ENCODE measurements at regions of chr1 and their contacts with region 1.

Region 1: DNA sequence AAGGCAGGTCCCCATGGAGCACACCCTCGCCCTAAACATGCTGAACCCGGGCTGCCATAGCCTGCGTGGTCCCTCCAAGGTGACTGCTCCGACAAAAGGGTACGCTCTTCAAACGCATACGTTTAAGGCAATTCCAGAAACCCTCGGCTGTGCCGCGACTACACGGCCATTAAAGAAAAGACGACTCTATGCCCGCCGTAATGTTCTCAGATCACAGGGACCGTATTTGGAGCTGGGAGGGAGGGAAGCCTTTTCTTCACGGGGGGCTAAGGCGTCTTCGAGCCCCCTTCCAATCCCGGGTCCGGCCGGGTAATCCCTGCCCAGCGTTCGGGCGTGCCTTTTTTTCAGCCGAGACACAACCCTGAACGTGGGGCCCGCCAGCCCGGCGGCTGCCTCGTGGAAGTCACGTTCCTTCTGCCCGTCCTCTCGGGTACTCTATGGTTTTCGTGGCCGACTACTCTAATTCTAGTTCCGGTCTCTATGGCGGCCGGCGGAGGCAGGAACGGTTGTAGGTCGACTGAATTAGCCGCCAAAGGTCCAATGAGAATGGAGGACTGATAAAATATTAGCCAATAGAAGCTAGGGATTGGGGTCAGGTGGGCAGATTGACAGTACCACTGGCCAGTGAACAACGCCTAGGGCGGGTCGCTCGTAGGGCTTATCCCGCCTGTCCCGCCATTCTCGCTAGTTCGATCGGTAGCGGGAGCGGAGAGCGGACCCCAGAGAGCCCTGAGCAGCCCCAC is at the start of gene YBX1:
- DNase-seq: peak; percentile 93 to 97
- H3K4me3 ChIP-seq: peak within 1 kb of the TSS; percentile 83 to 99 (median 94)
- H3K27ac ChIP-seq: peak within 1 kb of the TSS; percentile 89
- H3K4me1 ChIP-seq: peaks cover 2 to 8% (median 4%) of the 10 kb centered on the region in 4 experiments; a peak in 5 of 7 replicates
- H3K27me3 ChIP-seq: no peaks in the 10 kb centered on the region
- CTCF ChIP-seq: no peak
- EP300 ChIP-seq: no peak
- POLR2A ChIP-seq: peak in 1 of 2 experiments; percentile 60; a peak in 1 of 3 replicates
- RAD21 ChIP-seq: no peak
- total RNA-seq, gene YBX1: 1,219 and 1,248 TPM in 2 replicates

Region 2: DNA sequence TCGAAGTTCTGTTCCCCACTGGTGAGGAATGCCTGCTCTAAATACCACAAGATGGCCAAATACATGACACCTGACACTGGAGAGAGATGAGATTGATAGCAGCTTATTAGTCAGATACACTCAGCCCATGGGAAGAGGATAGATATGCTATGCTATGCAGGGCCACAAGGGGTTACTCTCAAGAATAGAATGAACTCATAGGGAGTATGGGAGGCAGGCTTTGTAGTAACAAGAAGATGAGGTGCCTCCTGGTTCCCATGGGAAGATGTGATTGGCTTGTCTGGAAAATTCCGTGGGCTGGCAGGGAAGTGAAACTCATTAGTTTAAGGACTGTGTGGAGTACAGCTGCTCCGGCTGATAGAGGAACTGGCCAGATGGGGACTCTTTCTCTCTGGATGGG is 202.3 kb before region 1 on chr1:
- CTCF ChIA-PET with region 1: no interaction called
- POLR2A ChIA-PET with region 1: no interaction called
- DNase-seq: no peak
- H3K4me3 ChIP-seq: no peak overlapping the region
- H3K27ac ChIP-seq: no peak overlapping the region
- H3K4me1 ChIP-seq: no peaks in the 10 kb centered on the region
- H3K27me3 ChIP-seq: no peaks in the 10 kb centered on the region
- CTCF ChIP-seq: peak in 2 of 3 experiments; percentile 24 to 60; a peak in 2 of 4 replicates
- EP300 ChIP-seq: no peak
- POLR2A ChIP-seq: no peak
- RAD21 ChIP-seq: peak; percentile 15 to 35; a peak in 2 of 4 replicates

Region 3: GRCh38 chr1:42657971-42658879 is 23.7 kb before region 1 on chr1 and contains the start of gene PPIH:
- CTCF ChIA-PET with region 1: no interaction called
- POLR2A ChIA-PET with region 1: interaction called, 33 read pairs
- DNase-seq: peak; percentile 78 to 92
- H3K4me3 ChIP-seq: peak within 1 kb of the TSS; percentile 87 to 98 (median 92)
- H3K27ac ChIP-seq: peak within 1 kb of the TSS; percentile 60
- H3K4me1 ChIP-seq: peaks cover 0 to 5% (median 3%) of the 10 kb centered on the region in 4 experiments; a peak in 4 of 7 replicates
- H3K27me3 ChIP-seq: no peaks in the 10 kb centered on the region
- CTCF ChIP-seq: peak; percentile 22 to 32 (median 31)
- EP300 ChIP-seq: peak in 1 of 2 experiments; percentile 53; a peak in 1 of 3 replicates
- POLR2A ChIP-seq: peak in 1 of 2 experiments; percentile 77; a peak in 2 of 3 replicates
- RAD21 ChIP-seq: no peak
- total RNA-seq, gene PPIH: 72.8 and 78.1 TPM in 2 replicates

Region 4: DNA sequence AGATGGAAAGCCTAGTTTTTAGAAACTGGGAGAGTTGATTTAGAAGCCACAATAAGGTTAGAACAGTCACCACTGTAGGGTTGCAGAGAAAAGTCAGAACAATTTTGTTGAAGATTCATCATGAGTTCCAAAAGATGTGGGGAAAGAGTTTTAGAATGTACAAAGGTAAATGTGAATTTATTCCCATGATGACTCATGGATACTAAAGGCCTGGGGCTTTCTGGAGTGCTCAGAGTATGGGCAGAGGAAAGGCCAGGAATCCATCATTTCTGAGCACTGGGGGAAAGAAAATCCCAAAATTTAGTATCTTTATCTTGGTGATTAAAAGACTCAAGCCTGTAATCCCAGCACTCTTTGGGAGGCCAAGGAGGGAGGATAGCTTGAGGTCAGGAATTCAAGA is 18.1 kb after region 1 on chr1:
- CTCF ChIA-PET with region 1: no interaction called
- POLR2A ChIA-PET with region 1: interaction called, 43 read pairs
- DNase-seq: no peak
- H3K4me3 ChIP-seq: no peak overlapping the region
- H3K27ac ChIP-seq: no peak overlapping the region
- H3K4me1 ChIP-seq: no peaks in the 10 kb centered on the region
- H3K27me3 ChIP-seq: no peaks in the 10 kb centered on the region
- CTCF ChIP-seq: no peak
- EP300 ChIP-seq: no peak
- POLR2A ChIP-seq: no peak
- RAD21 ChIP-seq: no peak

Region 5: GRCh38 chr1:42723501-42723900 is 41.6 kb after region 1 on chr1:
- CTCF ChIA-PET with region 1: no interaction called
- POLR2A ChIA-PET with region 1: interaction called, 30 read pairs
- DNase-seq: peak in 1 of 2 experiments; percentile 37
- H3K4me3 ChIP-seq: no peak overlapping the region
- H3K27ac ChIP-seq: no peak overlapping the region
- H3K4me1 ChIP-seq: no peaks in the 10 kb centered on the region
- H3K27me3 ChIP-seq: no peaks in the 10 kb centered on the region
- CTCF ChIP-seq: no peak
- EP300 ChIP-seq: no peak
- POLR2A ChIP-seq: no peak
- RAD21 ChIP-seq: no peak

Region 6: GRCh38 chr1:42736150-42736850 is 54.4 kb after region 1 on chr1:
- CTCF ChIA-PET with region 1: interaction called, 3 read pairs
- POLR2A ChIA-PET with region 1: interaction called, 32 read pairs
- DNase-seq: no peak
- H3K4me3 ChIP-seq: no peak overlapping the region
- H3K27ac ChIP-seq: no peak overlapping the region
- H3K4me1 ChIP-seq: peaks cover 0 to 31% (median 22%) of the 10 kb centered on the region in 4 experiments; a peak in 6 of 7 replicates
- H3K27me3 ChIP-seq: no peaks in the 10 kb centered on the region
- CTCF ChIP-seq: peak in 2 of 3 experiments; percentile 50 to 57; a peak in 3 of 4 replicates
- EP300 ChIP-seq: no peak
- POLR2A ChIP-seq: no peak
- RAD21 ChIP-seq: peak; percentile 19 to 49; a peak in 2 of 4 replicates

Region 7: GRCh38 chr1:42747125-42747524 is 65.2 kb after region 1 on chr1:
- CTCF ChIA-PET with region 1: interaction called, 11 read pairs
- POLR2A ChIA-PET with region 1: interaction called, 32 read pairs
- DNase-seq: peak in 1 of 2 experiments; percentile 86
- H3K4me3 ChIP-seq: no peak overlapping the region
- H3K27ac ChIP-seq: no peak overlapping the region
- H3K4me1 ChIP-seq: peaks cover 0 to 2% (median 0%) of the 10 kb centered on the region in 4 experiments; a peak in 1 of 7 replicates
- H3K27me3 ChIP-seq: no peaks in the 10 kb centered on the region
- CTCF ChIP-seq: peak; percentile 81 to 88 (median 86)
- EP300 ChIP-seq: no peak
- POLR2A ChIP-seq: no peak
- RAD21 ChIP-seq: peak; percentile 88 to 91

Region 8: DNA sequence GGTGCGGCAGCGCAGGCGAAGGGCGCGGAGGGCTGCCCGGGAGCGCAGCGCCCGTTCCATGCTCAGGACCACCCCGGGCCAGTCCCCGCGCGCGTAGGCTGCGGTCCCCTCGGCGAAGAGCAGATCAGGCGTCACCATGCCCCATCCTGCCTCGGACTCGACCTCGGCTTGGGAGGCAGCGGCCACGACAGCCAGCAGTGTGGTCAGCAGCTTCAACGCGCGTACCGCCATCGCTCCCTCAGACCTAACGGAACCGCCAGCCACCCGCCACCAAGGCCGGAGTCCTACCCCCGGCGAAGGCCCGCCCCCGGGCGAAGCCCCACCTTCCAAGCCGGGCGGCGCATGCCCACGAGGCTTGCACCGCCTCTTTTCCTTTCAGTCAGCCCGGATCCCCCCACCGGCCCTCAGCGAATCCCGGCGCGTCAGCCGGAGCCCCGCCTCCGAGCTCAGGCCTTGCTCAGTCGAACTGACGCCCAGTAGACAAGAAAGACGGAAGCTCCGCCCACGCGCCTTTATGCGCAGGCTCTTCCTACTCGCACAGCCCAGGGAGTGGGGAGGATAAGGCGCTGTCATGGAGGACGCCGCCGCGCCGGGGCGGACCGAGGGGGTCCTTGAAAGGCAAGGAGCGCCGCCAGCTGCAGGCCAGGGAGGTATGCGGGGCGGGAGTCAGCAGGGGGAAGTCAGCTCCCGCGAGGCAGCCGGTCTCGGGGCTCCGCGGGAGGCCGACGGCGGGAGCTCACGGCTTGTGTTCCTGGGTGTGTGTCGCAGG is 85.0 kb after region 1 on chr1 and contains the starts of genes C1orf50 and P3H1:
- CTCF ChIA-PET with region 1: interaction called, 4 read pairs
- POLR2A ChIA-PET with region 1: interaction called, 14 read pairs
- DNase-seq: peak; percentile 98 to 99
- H3K4me3 ChIP-seq: peak within 1 kb of the TSS; percentile 82 to 92 (median 84)
- H3K27ac ChIP-seq: peak within 1 kb of the TSS; percentile 17; the same call in 1 of the 2 replicates
- H3K4me1 ChIP-seq: peaks cover 0 to 6% (median 3%) of the 10 kb centered on the region in 4 experiments; a peak in 5 of 7 replicates
- H3K27me3 ChIP-seq: no peaks in the 10 kb centered on the region
- CTCF ChIP-seq: no peak
- EP300 ChIP-seq: no peak
- POLR2A ChIP-seq: peak in 1 of 2 experiments; percentile 73; a peak in 1 of 3 replicates
- RAD21 ChIP-seq: no peak
- total RNA-seq, gene C1orf50: 6.9 and 7.1 TPM in 2 replicates
- total RNA-seq, gene P3H1: 58.4 and 60.4 TPM in 2 replicates

Region 9: GRCh38 chr1:43048601-43049011 is 366.7 kb after region 1 on chr1:
- CTCF ChIA-PET with region 1: no interaction called
- POLR2A ChIA-PET with region 1: no interaction called
- DNase-seq: no peak
- H3K4me3 ChIP-seq: no peak overlapping the region
- H3K27ac ChIP-seq: no peak overlapping the region
- H3K4me1 ChIP-seq: peaks cover 0 to 3% (median 0%) of the 10 kb centered on the region in 4 experiments; a peak in 1 of 7 replicates
- H3K27me3 ChIP-seq: no peaks in the 10 kb centered on the region; a peak in 1 of 7 replicates
- CTCF ChIP-seq: no peak
- EP300 ChIP-seq: no peak
- POLR2A ChIP-seq: no peak
- RAD21 ChIP-seq: no peak